ENCODE measurements at regions of chr21 and their contacts with region 1.

Region 1: GRCh38 chr21:15071009-15071408 is 6.2 kb upstream of the NRIP1 start:
- DNase-seq: no peak
- ATAC-seq: no peak
- H3K4me3 ChIP-seq: no peak overlapping the region
- H3K27ac ChIP-seq: no peak overlapping the region
- H3K4me1 ChIP-seq: peaks cover 0 to 6% (median 0%) of the 10 kb centered on the region in 12 donors
- H3K27me3 ChIP-seq: no peaks in the 10 kb centered on the region
- CTCF ChIP-seq: no peak
- POLR2A ChIP-seq: no peak

Region 2: DNA sequence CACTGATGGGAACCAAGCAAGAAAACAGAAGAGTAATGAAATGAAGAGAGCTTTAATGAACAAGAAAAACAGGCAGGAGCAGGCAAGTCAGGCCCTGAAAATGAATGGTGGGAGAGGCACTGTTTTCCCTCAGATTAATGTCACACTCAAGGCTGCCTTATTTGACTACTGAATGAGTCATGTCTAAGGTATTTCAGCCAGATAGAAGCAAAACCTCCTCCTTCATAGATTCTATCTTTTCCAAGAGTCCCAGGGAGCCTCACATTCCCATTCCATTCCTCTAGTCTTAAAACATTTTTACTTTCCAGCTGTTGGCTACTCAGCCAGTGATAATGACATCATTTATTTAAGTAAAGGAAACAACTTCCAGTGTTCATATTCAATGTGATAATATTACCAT is 222.2 kb after region 1 on chr21:
- intact Hi-C with region 1: loop called in 1 of 10 experiments (anchors 10 kb)
- DNase-seq: no peak
- ATAC-seq: peak; percentile 58 to 92 (median 73)
- H3K4me3 ChIP-seq: no peak overlapping the region
- H3K27ac ChIP-seq: peak overlapping the region in 2 of 12 donors; percentile 6 to 39
- H3K4me1 ChIP-seq: no peaks in the 10 kb centered on the region
- H3K27me3 ChIP-seq: no peaks in the 10 kb centered on the region
- CTCF ChIP-seq: no peak
- POLR2A ChIP-seq: no peak